ENCODE measurements at regions of chr10 and their contacts with region 1.

Region 1: GRCh38 chr10:125868372-125868975 is 12.6 kb downstream of the DHX32 start:
- DNase-seq: peak; percentile 48
- ATAC-seq: peak; percentile 66
- H3K4me3 ChIP-seq: no peak overlapping the region
- H3K27ac ChIP-seq: no peak overlapping the region
- H3K4me1 ChIP-seq: no peaks in the 10 kb centered on the region
- H3K27me3 ChIP-seq: no peaks in the 10 kb centered on the region
- CTCF ChIP-seq: peak; percentile 71
- EP300 ChIP-seq: no peak
- POLR2A ChIP-seq: no peak
- RAD21 ChIP-seq: no peak

Region 2: GRCh38 chr10:125531465-125531864 is 337.0 kb before region 1 on chr10:
- CTCF ChIA-PET with region 1: no interaction called
- POLR2A ChIA-PET with region 1: no interaction called
- in situ Hi-C with region 1: no loop called
- intact Hi-C with region 1: no loop called
- DNase-seq: no peak
- ATAC-seq: no peak
- H3K4me3 ChIP-seq: no peak overlapping the region
- H3K27ac ChIP-seq: no peak overlapping the region
- H3K4me1 ChIP-seq: no peaks in the 10 kb centered on the region
- H3K27me3 ChIP-seq: peaks cover 7 to 30% of the 10 kb centered on the region in 2 experiments; a peak in 4 of 5 replicates
- CTCF ChIP-seq: no peak
- EP300 ChIP-seq: no peak
- POLR2A ChIP-seq: no peak
- RAD21 ChIP-seq: no peak

Region 3: DNA sequence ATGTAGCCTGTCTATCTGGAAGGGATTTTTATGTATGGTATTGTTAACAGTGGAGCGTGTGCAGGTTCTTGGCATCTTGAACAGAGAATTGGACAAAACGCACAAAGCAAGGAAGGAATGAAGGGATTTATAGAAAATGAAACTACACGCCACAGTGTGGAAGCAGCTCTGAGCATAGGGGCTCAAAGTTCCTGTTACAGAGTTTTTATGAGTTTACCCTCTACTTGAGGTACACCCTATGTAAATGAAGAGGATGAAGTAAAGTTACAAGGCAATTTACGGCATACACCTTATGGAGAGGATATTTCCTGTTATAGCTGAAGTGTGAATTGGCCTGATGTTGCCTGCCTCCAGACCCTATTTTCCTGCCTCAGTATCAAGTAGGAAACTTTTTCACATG is 61.1 kb after region 1 on chr10:
- CTCF ChIA-PET with region 1: interaction called, 3 read pairs
- POLR2A ChIA-PET with region 1: no interaction called
- in situ Hi-C with region 1: no loop called
- intact Hi-C with region 1: loop called (anchors 2 kb)
- DNase-seq: no peak
- ATAC-seq: no peak
- H3K4me3 ChIP-seq: no peak overlapping the region
- H3K27ac ChIP-seq: no peak overlapping the region
- H3K4me1 ChIP-seq: no peaks in the 10 kb centered on the region
- H3K27me3 ChIP-seq: peaks cover 0 to 5% of the 10 kb centered on the region in 2 experiments; a peak in 1 of 5 replicates
- CTCF ChIP-seq: no peak
- EP300 ChIP-seq: no peak
- POLR2A ChIP-seq: no peak
- RAD21 ChIP-seq: no peak

Region 4: GRCh38 chr10:126097558-126098225 is 229.2 kb after region 1 on chr10:
- CTCF ChIA-PET with region 1: no interaction called
- POLR2A ChIA-PET with region 1: no interaction called
- in situ Hi-C with region 1: no loop called
- intact Hi-C with region 1: loop called (anchors 5 kb)
- DNase-seq: peak; percentile 4
- ATAC-seq: no peak
- H3K4me3 ChIP-seq: no peak overlapping the region
- H3K27ac ChIP-seq: no peak overlapping the region
- H3K4me1 ChIP-seq: no peaks in the 10 kb centered on the region
- H3K27me3 ChIP-seq: peaks cover 2 to 24% of the 10 kb centered on the region in 2 experiments; a peak in 3 of 5 replicates
- CTCF ChIP-seq: no peak
- EP300 ChIP-seq: no peak
- POLR2A ChIP-seq: no peak
- RAD21 ChIP-seq: no peak

Region 5: DNA sequence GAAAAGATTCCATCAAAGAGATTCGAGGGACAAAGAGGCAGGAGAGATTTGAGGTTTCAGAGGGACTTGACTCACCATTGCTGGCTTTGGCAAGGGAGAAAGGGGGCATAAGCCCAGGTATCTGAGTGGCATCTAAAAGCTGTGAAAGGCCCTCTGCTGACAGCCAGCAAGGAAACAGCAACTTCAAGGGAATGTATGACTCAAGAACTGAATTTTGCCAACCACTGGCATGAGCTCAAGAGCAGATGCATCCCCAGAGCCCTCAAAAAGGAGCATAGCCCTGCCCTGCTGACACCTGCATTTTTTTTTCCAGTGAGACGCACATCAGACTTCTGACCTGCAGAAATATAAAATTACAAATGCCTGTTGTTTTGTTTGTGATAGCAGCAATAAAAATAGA is 539.4 kb after region 1 on chr10:
- CTCF ChIA-PET with region 1: no interaction called
- POLR2A ChIA-PET with region 1: no interaction called
- in situ Hi-C with region 1: no loop called
- intact Hi-C with region 1: no loop called
- DNase-seq: no peak
- ATAC-seq: no peak
- H3K4me3 ChIP-seq: no peak overlapping the region
- H3K27ac ChIP-seq: no peak overlapping the region
- H3K4me1 ChIP-seq: no peaks in the 10 kb centered on the region
- H3K27me3 ChIP-seq: peaks cover 2 to 10% of the 10 kb centered on the region in 2 experiments; a peak in 4 of 5 replicates
- CTCF ChIP-seq: no peak
- EP300 ChIP-seq: no peak
- POLR2A ChIP-seq: no peak
- RAD21 ChIP-seq: no peak

Region 6: GRCh38 chr10:126598003-126598402 is 729.5 kb after region 1 on chr10:
- CTCF ChIA-PET with region 1: no interaction called
- POLR2A ChIA-PET with region 1: no interaction called
- in situ Hi-C with region 1: no loop called
- intact Hi-C with region 1: loop called (anchors 5 kb)
- DNase-seq: peak; percentile 32
- ATAC-seq: peak; percentile 94
- H3K4me3 ChIP-seq: no peak overlapping the region
- H3K27ac ChIP-seq: no peak overlapping the region
- H3K4me1 ChIP-seq: no peaks in the 10 kb centered on the region
- H3K27me3 ChIP-seq: peaks cover 0 to 3% of the 10 kb centered on the region in 2 experiments; a peak in 1 of 5 replicates
- CTCF ChIP-seq: peak; percentile 66
- EP300 ChIP-seq: no peak
- POLR2A ChIP-seq: no peak
- RAD21 ChIP-seq: no peak

Region 7: GRCh38 chr10:127332631-127333030 is 1464.2 kb after region 1 on chr10:
- CTCF ChIA-PET with region 1: no interaction called
- POLR2A ChIA-PET with region 1: no interaction called
- in situ Hi-C with region 1: no loop called
- intact Hi-C with region 1: no loop called
- DNase-seq: no peak
- ATAC-seq: no peak
- H3K4me3 ChIP-seq: no peak overlapping the region
- H3K27ac ChIP-seq: no peak overlapping the region
- H3K4me1 ChIP-seq: no peaks in the 10 kb centered on the region
- H3K27me3 ChIP-seq: no peaks in the 10 kb centered on the region
- CTCF ChIP-seq: no peak
- EP300 ChIP-seq: no peak
- POLR2A ChIP-seq: no peak
- RAD21 ChIP-seq: no peak

Measured in HepG2 (cell line).